Spleen (tissue), 13 donors: ENCODE measurements at regions of chr3 and their contacts with region 1.

Region 1: DNA sequence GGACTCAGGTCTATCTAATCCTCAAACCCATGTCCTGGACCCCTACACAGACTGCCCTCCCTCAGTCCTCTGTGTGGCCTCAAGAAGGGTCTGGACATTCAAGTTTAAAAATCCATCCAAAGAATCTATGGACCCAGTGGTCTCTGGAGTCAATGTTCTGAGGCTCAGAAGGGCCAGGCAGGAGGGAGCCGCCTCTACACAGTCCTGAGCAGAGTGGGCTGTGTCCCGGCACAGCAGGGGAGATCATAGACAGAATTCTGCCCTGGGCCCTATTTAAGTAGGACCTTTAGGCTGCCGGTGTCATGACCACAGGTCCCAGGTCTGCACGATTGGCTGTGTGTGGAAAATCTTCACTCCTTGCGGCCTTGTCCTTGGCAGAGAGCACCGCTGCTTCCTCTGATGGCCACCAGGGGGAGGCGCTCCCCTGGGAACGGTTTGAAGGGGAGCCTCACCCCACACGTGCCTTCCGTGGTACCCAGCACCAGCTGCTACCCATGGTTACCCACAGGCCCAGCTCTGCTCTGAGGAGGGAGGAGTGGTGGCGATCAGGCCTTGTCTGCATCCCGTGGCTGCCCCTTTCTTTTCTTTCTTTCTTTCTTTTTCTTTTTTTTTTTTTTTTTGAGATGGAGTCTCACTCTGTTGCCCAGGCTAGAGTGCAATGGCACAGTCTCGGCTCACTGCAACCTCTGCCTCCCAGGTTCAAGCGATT is 37.9 kb downstream of the CHRD start:
- DNase-seq: peak; percentile 91
- H3K4me3 ChIP-seq: no peak overlapping the region
- H3K27ac ChIP-seq: no peak overlapping the region
- H3K4me1 ChIP-seq: peaks cover 0 to 6% (median 4%) of the 10 kb centered on the region in 6 donors
- H3K27me3 ChIP-seq: no peaks in the 10 kb centered on the region
- CTCF ChIP-seq: peak; percentile 75 to 95 (median 90)
- POLR2A ChIP-seq: no peak

Region 2: GRCh38 chr3:184261270-184261853 is 156.4 kb before region 1 on chr3 and contains the start of gene CAMK2N2:
- intact Hi-C with region 1: no loop called
- DNase-seq: peak; percentile 85
- H3K4me3 ChIP-seq: peak within 1 kb of the TSS; percentile 34 to 75 (median 54)
- H3K27ac ChIP-seq: peak within 1 kb of the TSS in 2 of 8 donors; percentile 13 to 24
- H3K4me1 ChIP-seq: peaks cover 17 to 39% (median 32%) of the 10 kb centered on the region in 6 donors
- H3K27me3 ChIP-seq: peaks cover 3 to 82% (median 55%) of the 10 kb centered on the region in 7 donors
- CTCF ChIP-seq: no peak
- POLR2A ChIP-seq: no peak
- total RNA-seq, gene CAMK2N2: 0.35 TPM in 1 of 7 donors, not detected in the others

Region 3: DNA sequence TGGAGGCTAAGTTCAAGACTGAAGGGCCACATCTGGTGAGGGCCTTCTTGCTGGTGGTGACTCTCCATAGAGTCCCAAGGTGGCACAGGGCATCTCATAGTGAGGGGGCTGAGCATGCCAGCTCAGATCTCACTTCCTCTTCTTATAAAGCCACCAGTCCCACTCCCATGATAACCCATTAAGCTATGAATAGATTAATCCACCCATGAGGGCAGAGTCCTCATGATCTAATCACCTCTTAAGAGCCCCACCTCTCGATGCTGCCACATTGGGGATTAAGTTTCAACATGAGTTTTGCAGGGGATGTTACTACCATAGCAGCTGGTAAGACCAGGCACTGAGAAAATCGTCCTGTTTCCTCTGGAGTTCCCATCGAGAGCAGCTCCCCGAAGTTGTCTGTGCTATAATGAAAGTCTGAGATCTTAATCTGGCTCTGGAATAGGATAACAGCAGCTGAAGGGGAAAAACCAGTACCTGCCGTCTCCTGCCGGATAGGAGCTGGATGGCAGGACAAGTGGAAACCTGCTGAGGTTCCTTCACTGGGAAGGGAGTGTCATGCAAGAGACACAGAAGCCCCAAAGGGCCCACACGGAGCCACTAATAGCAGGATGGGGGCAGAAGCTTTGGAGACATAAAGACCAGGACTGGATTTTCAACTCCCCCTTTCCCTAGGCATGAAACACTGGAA is 64.4 kb after region 1 on chr3:
- intact Hi-C with region 1: no loop called
- DNase-seq: no peak
- H3K4me3 ChIP-seq: no peak overlapping the region
- H3K27ac ChIP-seq: no peak overlapping the region
- H3K4me1 ChIP-seq: no peaks in the 10 kb centered on the region
- H3K27me3 ChIP-seq: peaks cover 0 to 21% (median 0%) of the 10 kb centered on the region in 7 donors
- CTCF ChIP-seq: no peak
- POLR2A ChIP-seq: no peak

Region 4: GRCh38 chr3:184513276-184514170 is 95.8 kb after region 1 on chr3:
- intact Hi-C with region 1: loop called (anchors 5 kb)
- DNase-seq: peak; percentile 93
- H3K4me3 ChIP-seq: peak overlapping the region; percentile 18 to 65 (median 32)
- H3K27ac ChIP-seq: peak overlapping the region in 6 of 8 donors; percentile 10 to 76 (median 61)
- H3K4me1 ChIP-seq: peaks cover 4 to 21% (median 19%) of the 10 kb centered on the region in 6 donors
- H3K27me3 ChIP-seq: peaks cover 0 to 51% (median 16%) of the 10 kb centered on the region in 7 donors
- CTCF ChIP-seq: peak; percentile 71 to 93 (median 91)
- POLR2A ChIP-seq: no peak